GM10248 (cell line): ENCODE measurements at regions of chr1 and their contacts with region 1.

Region 1: GRCh38 chr1:224162768-224163167 is 20.3 kb upstream of the DEGS1 start:
- DNase-seq: no peak
- CTCF ChIP-seq: no peak

Region 2: DNA sequence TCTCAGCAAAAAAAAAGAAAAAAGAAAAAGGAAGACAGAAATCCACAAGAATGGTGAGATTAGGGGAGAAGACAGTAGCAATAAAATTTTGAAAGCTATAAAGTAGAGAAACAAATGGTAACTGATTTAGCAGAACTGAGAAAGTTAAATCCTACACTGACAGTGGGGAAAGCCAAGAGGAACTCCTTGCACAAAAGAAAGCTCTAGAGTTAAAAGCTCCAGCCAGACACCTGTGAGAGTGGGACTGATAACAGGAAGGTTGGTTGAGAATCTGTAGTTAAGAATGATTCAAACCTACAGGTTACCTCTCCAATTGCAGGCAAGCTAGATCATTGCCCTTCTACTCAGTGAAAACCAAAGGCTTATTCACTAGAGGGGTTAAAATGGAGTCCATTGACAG is 25.2 kb before region 1 on chr1:
- CTCF ChIA-PET with region 1: interaction called, 10 read pairs
- POLR2A ChIA-PET with region 1: no interaction called
- DNase-seq: peak; percentile 11
- CTCF ChIP-seq: no peak

Region 3: GRCh38 chr1:224149713-224150112 is 13.1 kb before region 1 on chr1:
- CTCF ChIA-PET with region 1: interaction called, 17 read pairs
- POLR2A ChIA-PET with region 1: no interaction called
- DNase-seq: no peak
- CTCF ChIP-seq: no peak